Pancreas (tissue), 10 donors: ENCODE measurements at regions of chr12 and their contacts with region 1.

Region 1: DNA sequence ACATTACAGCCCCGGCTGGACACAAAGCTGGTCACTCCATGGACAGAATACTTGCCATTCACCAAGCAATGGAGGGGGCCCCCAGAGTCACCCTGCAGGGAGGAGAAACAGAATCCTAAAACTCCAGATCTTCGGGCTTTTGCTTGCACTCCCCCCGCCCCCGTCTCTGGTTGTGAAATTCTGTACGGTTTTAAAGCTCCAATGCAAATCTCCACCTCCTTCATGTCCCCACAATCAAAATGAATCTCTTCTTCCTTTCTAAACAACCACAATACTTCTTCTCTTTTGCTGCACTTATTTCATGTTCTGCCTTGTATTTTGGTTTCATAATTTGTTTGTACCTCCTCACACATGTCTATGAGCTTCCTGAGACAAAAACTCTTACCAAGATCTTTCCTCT is 5.8 kb upstream of the BIN2 start:
- DNase-seq: no peak
- ATAC-seq: no peak
- H3K4me3 ChIP-seq: no peak overlapping the region
- H3K27ac ChIP-seq: no peak overlapping the region
- H3K4me1 ChIP-seq: no peaks in the 10 kb centered on the region
- H3K27me3 ChIP-seq: no peaks in the 10 kb centered on the region
- CTCF ChIP-seq: no peak

Region 2: DNA sequence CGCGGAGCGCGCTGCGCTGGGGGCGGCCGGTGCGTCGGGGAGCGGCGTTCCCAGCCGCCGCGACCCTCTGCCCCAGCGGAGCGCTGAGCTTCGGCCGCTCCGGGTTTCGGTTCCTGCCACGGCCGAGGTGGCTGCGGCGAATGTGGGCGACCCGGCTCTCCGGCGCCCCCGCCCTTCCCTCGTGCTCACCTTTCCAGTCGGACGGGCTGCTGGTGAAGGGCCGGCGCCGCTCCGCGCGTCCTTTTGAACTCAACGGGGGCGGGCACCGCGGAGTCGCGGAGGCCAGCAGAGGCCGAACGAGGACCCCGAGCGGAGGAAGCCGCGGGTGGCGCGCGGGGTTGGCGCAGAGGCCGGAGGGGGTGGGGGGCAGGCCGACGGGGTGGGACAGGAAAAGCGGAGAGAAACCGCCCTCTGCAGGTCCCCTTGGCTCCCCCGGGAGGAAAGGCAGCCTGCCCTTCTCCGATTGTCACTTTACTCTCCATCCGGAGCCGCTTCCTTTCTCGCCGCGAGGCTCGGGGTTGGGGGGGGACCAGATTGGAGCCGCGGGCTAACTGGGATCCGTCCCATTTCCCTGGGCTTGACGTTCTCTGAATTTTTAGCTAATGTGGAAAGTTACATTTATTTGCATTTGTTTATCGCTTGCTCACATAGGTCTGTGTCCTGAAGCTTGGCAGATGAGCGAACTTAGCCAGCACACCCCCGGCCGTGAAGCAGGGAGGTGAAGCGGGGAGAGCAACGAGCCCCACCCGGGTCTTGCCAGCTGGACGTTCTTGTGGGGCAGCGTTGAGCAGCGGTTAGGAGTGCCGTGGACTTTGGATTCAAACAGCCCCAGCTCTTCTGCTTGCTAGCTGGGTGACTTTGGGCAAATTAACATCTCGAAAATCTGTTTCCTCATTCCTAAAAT is 59.4 kb before region 1 on chr12 and contains the start of gene SMAGP:
- intact Hi-C with region 1: loop called in 1 of 3 experiments (anchors 10 kb)
- DNase-seq: peak; percentile 78 to 92 (median 83)
- ATAC-seq: peak; percentile 80 to 89 (median 87)
- H3K4me3 ChIP-seq: peak within 1 kb of the TSS; percentile 36 to 88 (median 69)
- H3K27ac ChIP-seq: peak within 1 kb of the TSS; percentile 46 to 84 (median 74)
- H3K4me1 ChIP-seq: peaks cover 0 to 5% (median 0%) of the 10 kb centered on the region in 3 donors
- H3K27me3 ChIP-seq: no peaks in the 10 kb centered on the region
- CTCF ChIP-seq: no peak
- total RNA-seq, gene SMAGP: 3.4 to 9.7 (median 7.2) TPM

Region 3: DNA sequence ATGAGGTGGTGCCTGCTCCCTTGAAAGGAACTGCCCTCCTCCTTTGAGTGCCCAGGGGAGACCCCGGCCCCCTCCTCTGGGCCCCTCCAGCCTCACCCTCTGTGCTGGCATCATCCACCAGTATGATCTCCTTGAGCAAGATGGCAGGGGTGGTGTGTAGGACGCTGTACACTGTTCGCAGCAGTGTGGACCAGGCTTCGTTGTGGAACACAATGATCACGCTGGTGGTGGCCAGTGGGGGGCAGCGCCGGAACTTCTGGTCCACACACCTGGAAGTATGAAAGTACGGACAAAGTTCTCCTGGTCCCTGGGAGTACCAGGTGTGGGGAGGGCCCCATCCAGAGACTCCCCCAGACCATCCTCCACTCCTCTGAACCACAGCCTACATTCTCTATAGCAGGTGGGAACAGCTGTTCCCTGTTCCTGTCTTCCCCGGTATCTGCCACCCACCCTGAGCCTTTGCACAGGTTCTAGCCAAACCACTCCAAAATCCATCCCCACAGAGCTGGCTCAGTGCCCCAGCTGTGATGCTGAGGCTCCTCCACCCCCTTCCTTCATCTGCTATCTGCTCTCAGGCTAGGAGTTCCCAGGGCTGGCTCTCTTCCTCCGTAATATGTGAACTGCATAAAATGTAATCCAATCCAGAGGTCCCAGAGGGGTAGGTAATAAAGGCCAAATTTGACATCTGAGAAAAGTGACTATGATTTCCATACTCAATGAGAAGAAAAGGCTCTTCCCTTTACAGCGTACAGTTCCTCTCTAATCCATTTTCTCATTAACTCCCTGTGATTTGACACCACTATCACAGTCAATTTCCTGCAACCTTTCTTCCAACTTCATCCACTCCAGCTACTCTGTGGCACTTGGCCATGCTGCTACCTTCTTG is 47.6 kb after region 1 on chr12:
- intact Hi-C with region 1: no loop called
- DNase-seq: no peak
- ATAC-seq: no peak
- H3K4me3 ChIP-seq: no peak overlapping the region
- H3K27ac ChIP-seq: no peak overlapping the region
- H3K4me1 ChIP-seq: no peaks in the 10 kb centered on the region
- H3K27me3 ChIP-seq: no peaks in the 10 kb centered on the region
- CTCF ChIP-seq: no peak

Region 4: GRCh38 chr12:51672334-51672733 is 342.6 kb after region 1 on chr12:
- intact Hi-C with region 1: no loop called
- DNase-seq: no peak
- ATAC-seq: peak in 2 of 4 donors; percentile 53 to 74
- H3K4me3 ChIP-seq: no peak overlapping the region
- H3K27ac ChIP-seq: no peak overlapping the region
- H3K4me1 ChIP-seq: peaks cover 0 to 5% (median 0%) of the 10 kb centered on the region in 3 donors
- H3K27me3 ChIP-seq: no peaks in the 10 kb centered on the region
- CTCF ChIP-seq: no peak